ENCODE measurements at regions of chrX and their contacts with region 1.

Region 1: DNA sequence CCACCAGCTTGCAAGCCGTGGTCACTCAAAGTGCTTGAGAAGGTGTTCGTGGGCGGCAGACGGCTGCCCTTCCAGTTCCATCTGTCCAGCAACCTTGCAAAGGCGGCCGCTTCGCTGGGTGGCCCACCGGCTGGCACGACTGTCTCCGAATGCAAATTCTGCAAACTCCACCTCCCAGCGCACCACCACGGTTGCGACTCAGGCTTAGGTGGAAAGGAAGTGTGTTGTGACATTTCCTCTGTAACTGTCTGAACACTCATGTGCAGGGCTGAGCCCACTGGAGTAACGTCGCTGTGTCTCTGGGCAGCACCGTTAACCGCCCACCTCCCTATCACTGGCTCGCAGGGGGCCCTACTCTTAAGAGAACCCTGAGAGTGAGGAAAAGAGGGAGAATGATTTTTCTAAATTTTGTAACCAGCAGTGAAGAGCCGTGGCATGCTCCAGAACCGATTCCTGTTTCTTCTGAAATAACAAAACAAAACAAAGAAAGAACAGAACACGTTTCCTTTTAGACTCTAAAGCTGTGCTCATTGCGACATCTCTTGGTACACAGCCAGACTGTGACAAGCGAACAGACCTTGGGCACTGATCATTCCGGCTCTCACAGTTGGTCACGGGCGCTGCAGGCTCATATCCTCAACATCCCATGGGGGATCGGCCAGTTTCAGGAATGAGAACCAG is at the start of gene P2RY8:
- DNase-seq: peak; percentile 75
- ATAC-seq: peak; percentile 69
- H3K4me3 ChIP-seq: peak within 1 kb of the TSS; percentile 92
- H3K27ac ChIP-seq: peak within 1 kb of the TSS; percentile 97
- H3K4me1 ChIP-seq: peaks cover 4% of the 10 kb centered on the region; the same call in 1 of the 2 replicates
- H3K27me3 ChIP-seq: no peaks in the 10 kb centered on the region
- CTCF ChIP-seq: peak; percentile 16 to 73 (median 48); a peak in 4 of 6 replicates
- EP300 ChIP-seq: no peak
- POLR2A ChIP-seq: peak; percentile 90
- RAD21 ChIP-seq: peak; percentile 79
- polyA plus RNA-seq, gene P2RY8: 2.0 to 4.0 TPM

Region 2: GRCh38 chrX:1481636-1482529 is 55.3 kb before region 1 on chrX:
- CTCF ChIA-PET with region 1: no interaction called
- POLR2A ChIA-PET with region 1: no interaction called
- RAD21 ChIA-PET with region 1: no interaction called
- SMC1A ChIA-PET with region 1: no interaction called
- in situ Hi-C with region 1: no loop called
- intact Hi-C with region 1: loop called (anchors 2 kb)
- DNase-seq: peak; percentile 90
- ATAC-seq: peak; percentile 76
- H3K4me3 ChIP-seq: peak overlapping the region; percentile 68
- H3K27ac ChIP-seq: peak overlapping the region; percentile 96
- H3K4me1 ChIP-seq: peaks cover 59% of the 10 kb centered on the region
- H3K27me3 ChIP-seq: no peaks in the 10 kb centered on the region
- CTCF ChIP-seq: peak; percentile 14 to 20 (median 17); a peak in 1 of 6 replicates
- EP300 ChIP-seq: peak; percentile 78 to 88; a peak in 2 of 4 replicates
- POLR2A ChIP-seq: peak; percentile 77
- RAD21 ChIP-seq: peak; percentile 36; the same call in 1 of the 2 replicates

Region 3: GRCh38 chrX:1500701-1501624 is 36.2 kb before region 1 on chrX:
- CTCF ChIA-PET with region 1: no interaction called
- POLR2A ChIA-PET with region 1: no interaction called
- RAD21 ChIA-PET with region 1: no interaction called
- SMC1A ChIA-PET with region 1: no interaction called
- in situ Hi-C with region 1: no loop called
- intact Hi-C with region 1: loop called (anchors 1 kb)
- DNase-seq: peak; percentile 90
- ATAC-seq: peak; percentile 69
- H3K4me3 ChIP-seq: no peak overlapping the region
- H3K27ac ChIP-seq: peak overlapping the region; percentile 87
- H3K4me1 ChIP-seq: peaks cover 53% of the 10 kb centered on the region
- H3K27me3 ChIP-seq: no peaks in the 10 kb centered on the region
- CTCF ChIP-seq: no peak
- EP300 ChIP-seq: peak; percentile 49 to 71; a peak in 2 of 4 replicates
- POLR2A ChIP-seq: no peak
- RAD21 ChIP-seq: 0 out of 2 replicates have a peak, but pooled peaks have one; percentile 3

Region 4: DNA sequence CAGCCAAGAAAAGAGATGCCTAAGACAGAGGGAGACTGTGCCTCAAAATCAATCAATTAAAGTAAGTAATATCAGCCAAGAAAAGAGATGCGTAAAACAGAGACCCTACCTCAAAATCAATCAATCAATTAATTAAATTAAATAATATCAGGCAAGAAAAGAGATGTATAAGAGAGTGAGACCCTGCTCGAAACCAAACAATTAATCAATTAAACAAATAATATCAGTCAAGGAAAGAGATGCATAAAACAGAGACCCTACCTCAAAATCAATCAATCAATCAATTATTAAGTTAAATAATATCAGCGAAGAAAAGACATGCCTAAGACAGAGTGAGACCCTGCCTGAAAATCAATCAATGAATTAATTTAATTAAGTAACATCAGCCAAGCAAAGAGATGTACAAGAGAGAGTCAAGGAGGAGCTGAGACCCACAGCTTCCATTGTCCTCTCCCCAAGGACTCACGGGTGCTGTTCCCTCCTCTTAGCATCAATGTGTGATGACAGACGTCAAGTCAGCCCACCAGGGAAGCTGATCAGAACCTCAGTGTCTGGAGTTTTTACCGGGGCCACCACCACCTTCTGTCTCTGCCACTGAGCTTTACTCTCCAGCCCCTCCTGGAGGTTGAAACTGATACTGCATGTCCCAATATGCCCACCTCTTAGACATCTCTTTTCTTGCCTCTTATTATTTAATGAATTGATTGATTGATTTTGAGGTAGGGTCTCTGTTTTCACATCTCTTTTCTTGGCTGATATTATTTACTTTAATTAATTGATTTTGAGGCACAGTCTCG is 43.8 kb after region 1 on chrX:
- CTCF ChIA-PET with region 1: no interaction called
- POLR2A ChIA-PET with region 1: no interaction called
- RAD21 ChIA-PET with region 1: no interaction called
- SMC1A ChIA-PET with region 1: no interaction called
- in situ Hi-C with region 1: no loop called
- intact Hi-C with region 1: loop called (anchors 2 kb)
- DNase-seq: no peak
- ATAC-seq: peak; percentile 67
- H3K4me3 ChIP-seq: no peak overlapping the region
- H3K27ac ChIP-seq: no peak overlapping the region
- H3K4me1 ChIP-seq: peaks cover 16% of the 10 kb centered on the region
- H3K27me3 ChIP-seq: no peaks in the 10 kb centered on the region
- CTCF ChIP-seq: peak; percentile 64 to 82 (median 81)
- EP300 ChIP-seq: no peak
- POLR2A ChIP-seq: no peak
- RAD21 ChIP-seq: peak; percentile 71

Measured in GM12878 (cell line).